ENCODE measurements at regions of chr3 and their contacts with region 1.

Region 1: GRCh38 chr3:17179381-17180210 is 294.8 kb downstream of the PLCL2 start:
- DNase-seq: no peak
- H3K4me3 ChIP-seq: no peak overlapping the region
- H3K27ac ChIP-seq: no peak overlapping the region
- H3K4me1 ChIP-seq: peaks cover 0 to 26% of the 10 kb centered on the region in 2 donors
- H3K27me3 ChIP-seq: no peaks in the 10 kb centered on the region
- CTCF ChIP-seq: no peak

Region 2: GRCh38 chr3:16884084-16884747 is 295.4 kb before region 1 on chr3:
- intact Hi-C with region 1: loop called (anchors 5 kb)
- DNase-seq: peak in 1 of 2 donors; percentile 75
- H3K4me3 ChIP-seq: peak overlapping the region; percentile 84 to 95
- H3K27ac ChIP-seq: peak overlapping the region; percentile 86 to 90
- H3K4me1 ChIP-seq: peaks cover 0 to 17% of the 10 kb centered on the region in 2 donors
- H3K27me3 ChIP-seq: no peaks in the 10 kb centered on the region
- CTCF ChIP-seq: peak in 2 of 3 experiments; percentile 54 to 69

Region 3: DNA sequence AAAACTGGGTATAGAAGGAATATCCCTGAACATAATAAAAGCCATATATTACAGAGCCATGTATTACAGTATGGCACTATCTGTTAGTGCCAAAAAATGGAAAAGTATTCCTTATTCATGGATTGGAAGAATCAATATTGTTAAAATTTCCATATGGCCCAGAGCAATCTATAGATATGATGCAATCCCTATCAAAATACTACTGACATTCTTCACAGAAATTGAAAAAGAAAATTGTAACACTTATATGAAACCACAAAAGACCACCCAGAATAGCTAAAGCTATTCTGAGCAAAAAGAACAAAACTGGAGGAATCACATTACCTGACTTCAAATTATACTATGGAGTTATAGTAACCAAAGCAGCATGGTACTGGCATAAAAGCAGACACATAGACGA is 76.0 kb before region 1 on chr3:
- intact Hi-C with region 1: no loop called
- DNase-seq: no peak
- H3K4me3 ChIP-seq: no peak overlapping the region
- H3K27ac ChIP-seq: no peak overlapping the region
- H3K4me1 ChIP-seq: no peaks in the 10 kb centered on the region
- H3K27me3 ChIP-seq: no peaks in the 10 kb centered on the region
- CTCF ChIP-seq: no peak

Region 4: DNA sequence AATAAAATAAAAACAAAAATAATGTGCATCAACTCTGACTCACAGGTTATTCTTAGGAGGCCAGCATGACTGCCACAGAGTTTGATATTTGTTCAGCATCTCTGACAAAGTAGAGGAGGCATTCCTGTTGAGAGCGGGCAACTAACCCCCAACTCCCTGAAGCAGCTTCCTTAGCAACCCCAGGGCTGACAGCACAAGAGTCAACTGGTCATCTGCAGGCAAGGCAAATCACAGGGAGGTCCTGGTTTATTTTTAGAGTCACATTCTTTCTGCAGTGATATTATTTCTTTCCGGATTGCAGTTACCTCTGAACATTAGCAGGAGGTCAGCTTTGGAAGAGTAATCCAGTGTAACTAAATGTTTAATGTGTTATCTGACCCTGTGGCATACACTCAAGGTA is 21.9 kb before region 1 on chr3:
- intact Hi-C with region 1: loop called (anchors 2 kb)
- DNase-seq: peak in 1 of 2 donors; percentile 71
- H3K4me3 ChIP-seq: no peak overlapping the region
- H3K27ac ChIP-seq: peak overlapping the region; percentile 56 to 76
- H3K4me1 ChIP-seq: peaks cover 0 to 12% of the 10 kb centered on the region in 2 donors
- H3K27me3 ChIP-seq: no peaks in the 10 kb centered on the region
- CTCF ChIP-seq: no peak

Region 5: GRCh38 chr3:17742108-17742879 is 562.7 kb after region 1 on chr3 and contains the start of gene TBC1D5:
- intact Hi-C with region 1: loop called (anchors 5 kb)
- DNase-seq: peak; percentile 87 to 98
- H3K4me3 ChIP-seq: peak within 1 kb of the TSS; percentile 68 to 96
- H3K27ac ChIP-seq: peak within 1 kb of the TSS; percentile 93 to 98
- H3K4me1 ChIP-seq: peaks cover 2 to 17% of the 10 kb centered on the region in 2 donors
- H3K27me3 ChIP-seq: no peaks in the 10 kb centered on the region
- CTCF ChIP-seq: peak in 1 of 3 experiments; percentile 11
- total RNA-seq, gene TBC1D5: 43.3 TPM